MCF 10A (cell line): ENCODE measurements at regions of chr20 and their contacts with region 1.

Region 1: GRCh38 chr20:22846863-22847262 is 188.2 kb upstream of the SSTR4 start:
- DNase-seq: no peak
- H3K4me3 Mint-ChIP-seq: no peak overlapping the region
- H3K27ac Mint-ChIP-seq: no peak overlapping the region
- H3K4me1 Mint-ChIP-seq: no peaks in the 10 kb centered on the region
- H3K27me3 Mint-ChIP-seq: no peaks in the 10 kb centered on the region
- CTCF ChIP-seq: no peak

Region 2: DNA sequence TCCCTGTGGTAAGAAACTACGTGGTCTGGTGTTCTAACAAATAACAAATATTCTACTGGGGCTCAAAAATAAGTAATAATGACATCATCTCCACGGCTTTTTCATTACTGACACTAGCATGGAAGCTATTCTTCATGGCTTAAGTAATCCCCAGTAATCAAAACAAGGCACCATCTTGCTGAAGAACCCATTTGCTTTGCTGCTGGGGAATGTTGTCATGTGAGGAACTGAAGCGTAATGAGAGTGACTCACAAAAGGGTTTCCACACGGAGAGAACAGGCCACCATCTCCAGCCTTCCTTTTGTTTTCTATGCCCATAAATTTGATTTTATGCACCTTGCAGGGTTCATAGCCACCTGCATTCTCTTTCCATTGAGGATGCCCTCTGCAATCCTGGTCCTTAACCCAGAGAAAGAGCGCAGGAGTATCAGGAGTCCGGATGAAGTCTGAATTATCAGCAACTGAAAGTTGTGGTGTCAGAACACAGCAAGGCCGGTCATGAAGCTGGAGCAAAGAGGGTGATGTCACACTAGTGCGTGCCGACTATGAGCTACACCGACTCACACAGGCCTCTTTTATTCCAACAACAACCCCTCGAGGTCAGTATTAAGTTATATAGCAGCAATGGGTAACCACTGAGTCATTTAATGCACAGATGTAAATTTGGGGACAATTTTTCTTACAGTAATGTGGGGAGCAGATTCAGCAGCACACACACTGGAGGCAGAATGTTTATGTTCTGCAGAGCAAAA is 14.5 kb after region 1 on chr20:
- CTCF ChIA-PET with region 1: interaction called, 21 read pairs
- POLR2A ChIA-PET with region 1: interaction called, 3 read pairs
- intact Hi-C with region 1: no loop called
- DNase-seq: no peak
- H3K4me3 Mint-ChIP-seq: no peak overlapping the region
- H3K27ac Mint-ChIP-seq: no peak overlapping the region
- H3K4me1 Mint-ChIP-seq: peaks cover 9% of the 10 kb centered on the region
- H3K27me3 Mint-ChIP-seq: no peaks in the 10 kb centered on the region
- CTCF ChIP-seq: no peak